ENCODE measurements at regions of chr18 and their contacts with region 1.

Region 1: GRCh38 chr18:41009926-41010325 is 945.1 kb upstream of the PIK3C3 start:
- DNase-seq: no peak
- ATAC-seq: no peak
- H3K4me3 ChIP-seq: no peak overlapping the region
- H3K4me3 Mint-ChIP-seq: no peak overlapping the region
- H3K27ac ChIP-seq: no peak overlapping the region
- H3K27ac Mint-ChIP-seq: no peak overlapping the region
- H3K4me1 ChIP-seq: no peaks in the 10 kb centered on the region
- H3K4me1 Mint-ChIP-seq: no peaks in the 10 kb centered on the region
- H3K27me3 ChIP-seq: no peaks in the 10 kb centered on the region
- H3K27me3 Mint-ChIP-seq: no peaks in the 10 kb centered on the region
- CTCF ChIP-seq: no peak

Region 2: GRCh38 chr18:41371156-41372045 is 361.5 kb after region 1 on chr18:
- CTCF ChIA-PET with region 1: no interaction called
- POLR2A ChIA-PET with region 1: no interaction called
- intact Hi-C with region 1: loop called in 1 of 2 experiments (anchors 5 kb)
- DNase-seq: no peak
- ATAC-seq: no peak
- H3K4me3 ChIP-seq: no peak overlapping the region
- H3K4me3 Mint-ChIP-seq: no peak overlapping the region
- H3K27ac ChIP-seq: no peak overlapping the region
- H3K27ac Mint-ChIP-seq: no peak overlapping the region
- H3K4me1 ChIP-seq: no peaks in the 10 kb centered on the region
- H3K4me1 Mint-ChIP-seq: no peaks in the 10 kb centered on the region
- H3K27me3 ChIP-seq: no peaks in the 10 kb centered on the region
- H3K27me3 Mint-ChIP-seq: no peaks in the 10 kb centered on the region
- CTCF ChIP-seq: no peak